ENCODE measurements at regions of chr1 and their contacts with region 1.

Region 1: GRCh38 chr1:145601593-145601992 is 6.2 kb upstream of the GPR89A start:
- DNase-seq: no peak
- H3K4me3 ChIP-seq: no peak overlapping the region
- H3K27ac ChIP-seq: no peak overlapping the region
- H3K4me1 ChIP-seq: no peaks in the 10 kb centered on the region
- H3K27me3 ChIP-seq: no peaks in the 10 kb centered on the region
- CTCF ChIP-seq: no peak

Region 2: DNA sequence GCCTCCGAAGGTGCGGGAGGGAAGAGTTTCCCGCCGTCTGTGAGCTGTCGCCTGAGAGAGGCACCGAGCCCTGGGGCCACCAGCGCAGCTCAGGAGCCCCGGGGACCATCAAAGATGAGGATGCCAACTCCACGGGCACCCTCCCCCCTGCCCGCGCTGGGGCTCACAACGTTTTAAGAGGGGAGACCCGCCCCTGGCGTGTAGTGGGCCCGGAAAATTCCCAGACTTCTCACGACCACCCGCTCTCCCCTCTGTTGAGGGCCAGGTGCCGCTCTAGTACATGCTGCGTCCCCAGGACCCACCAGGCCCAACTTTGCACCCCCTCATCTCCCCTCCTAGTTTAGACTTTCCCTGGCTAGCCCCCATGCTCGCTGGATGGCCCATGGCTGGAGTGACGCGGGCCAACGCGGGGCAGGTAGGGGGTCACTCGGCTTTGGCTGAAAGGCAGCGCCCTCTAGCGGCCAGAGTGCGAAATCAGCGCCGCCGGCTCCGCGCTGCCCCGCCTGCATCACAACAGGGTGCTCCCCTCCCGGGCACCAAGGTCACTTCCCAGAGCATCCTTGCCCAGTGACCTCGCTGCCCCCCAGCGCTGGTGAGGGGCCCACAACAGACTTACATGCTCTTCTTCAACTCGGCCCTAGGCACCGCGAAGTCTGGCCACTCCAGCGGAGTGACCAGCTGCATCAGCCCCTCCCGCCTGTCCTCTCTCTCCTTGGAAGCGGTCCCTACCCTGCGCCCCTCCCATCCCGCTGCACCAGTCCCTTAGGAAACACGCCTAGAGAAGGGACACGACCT is 119.5 kb after region 1 on chr1:
- intact Hi-C with region 1: loop called (anchors 10 kb)
- DNase-seq: peak; percentile 62
- H3K4me3 ChIP-seq: no peak overlapping the region
- H3K27ac ChIP-seq: no peak overlapping the region
- H3K4me1 ChIP-seq: peaks cover 4% of the 10 kb centered on the region
- H3K27me3 ChIP-seq: no peaks in the 10 kb centered on the region
- CTCF ChIP-seq: peak; percentile 93

Measured in colonic mucosa (tissue), 4 donors.